A549 (cell line): ENCODE measurements at regions of chr2 and their contacts with region 1.

Region 1: GRCh38 chr2:86623651-86624541 is at the start of gene RNF103:
- DNase-seq: peak; percentile 89 to 96
- ATAC-seq: peak; percentile 88 to 92
- H3K4me3 ChIP-seq: peak within 1 kb of the TSS; percentile 84
- H3K27ac ChIP-seq: peak within 1 kb of the TSS; percentile 89 to 97
- H3K4me1 ChIP-seq: peaks cover 30% of the 10 kb centered on the region
- CTCF ChIP-seq: no peak
- EP300 ChIP-seq: no peak
- POLR2A ChIP-seq: peak; percentile 91
- RAD21 ChIP-seq: no peak
- polyA plus RNA-seq, gene RNF103: 30.0 and 38.3 TPM in 2 replicates

Region 2: DNA sequence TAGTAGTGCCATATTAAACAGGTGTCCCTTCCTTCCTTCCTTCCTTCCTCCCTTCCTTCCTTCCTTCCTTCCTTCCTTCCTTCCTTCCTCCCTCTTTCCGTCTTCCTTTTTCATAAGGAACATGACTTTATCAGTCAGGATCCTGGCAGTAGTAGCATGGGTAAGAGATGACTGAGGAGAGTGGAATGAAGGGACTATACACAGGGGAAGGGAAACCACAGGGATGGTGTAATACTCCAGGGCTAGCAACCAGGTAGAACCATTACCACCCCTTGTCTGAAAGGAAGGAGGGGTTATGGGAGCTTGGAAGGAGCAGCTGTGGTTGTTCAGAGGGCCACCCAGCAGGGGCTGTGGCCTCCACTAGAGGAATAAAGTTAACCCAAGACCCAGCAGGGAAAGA is 205.9 kb before region 1 on chr2:
- CTCF ChIA-PET with region 1: no interaction called
- POLR2A ChIA-PET with region 1: no interaction called
- DNase-seq: no peak
- ATAC-seq: peak in 1 of 2 experiments; percentile 50; a peak in 3 of 6 replicates
- H3K4me3 ChIP-seq: no peak overlapping the region
- H3K27ac ChIP-seq: no peak overlapping the region
- H3K4me1 ChIP-seq: no peaks in the 10 kb centered on the region
- CTCF ChIP-seq: no peak
- EP300 ChIP-seq: no peak
- POLR2A ChIP-seq: no peak
- RAD21 ChIP-seq: no peak

Region 3: GRCh38 chr2:86541334-86541733 is 82.6 kb before region 1 on chr2:
- CTCF ChIA-PET with region 1: no interaction called
- POLR2A ChIA-PET with region 1: no interaction called
- DNase-seq: no peak
- ATAC-seq: no peak
- H3K4me3 ChIP-seq: no peak overlapping the region
- H3K27ac ChIP-seq: no peak overlapping the region
- H3K4me1 ChIP-seq: no peaks in the 10 kb centered on the region
- CTCF ChIP-seq: no peak
- EP300 ChIP-seq: no peak
- POLR2A ChIP-seq: no peak
- RAD21 ChIP-seq: no peak

Region 4: DNA sequence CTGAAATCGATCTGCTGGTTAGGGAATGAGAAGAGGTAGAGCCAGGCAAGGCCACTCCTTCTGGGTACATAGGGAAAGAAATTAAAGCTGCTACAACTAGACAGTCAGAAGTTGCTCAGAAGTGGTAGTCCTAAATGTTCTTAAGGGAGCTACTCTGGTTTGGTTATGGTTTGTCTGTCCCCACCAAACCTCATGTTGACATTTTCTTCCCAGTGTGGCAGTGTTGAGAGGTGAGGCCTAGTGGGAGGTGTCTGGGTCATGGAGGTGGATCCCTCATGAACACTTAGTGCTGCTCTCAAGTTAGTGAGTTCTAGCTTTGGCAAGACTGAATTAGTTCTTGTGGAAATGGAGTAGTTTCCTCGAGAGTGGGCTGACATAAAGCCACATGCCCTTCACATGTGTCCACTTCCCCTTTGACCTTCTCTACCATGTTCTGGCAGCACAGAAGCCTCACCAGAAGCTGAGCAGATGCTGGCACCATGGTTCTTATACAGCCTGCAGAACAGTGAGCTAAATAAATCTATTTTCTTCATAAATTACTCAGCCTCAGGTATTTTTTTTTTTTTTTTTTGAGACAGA is 15.0 kb before region 1 on chr2:
- CTCF ChIA-PET with region 1: interaction called, 10 read pairs
- POLR2A ChIA-PET with region 1: interaction called, 6 read pairs
- DNase-seq: no peak
- ATAC-seq: no peak
- H3K4me3 ChIP-seq: no peak overlapping the region
- H3K27ac ChIP-seq: no peak overlapping the region
- H3K4me1 ChIP-seq: no peaks in the 10 kb centered on the region
- CTCF ChIP-seq: no peak
- EP300 ChIP-seq: no peak
- POLR2A ChIP-seq: no peak
- RAD21 ChIP-seq: no peak